PC-3 (cell line): ENCODE measurements at regions of chr14 and their contacts with region 1.

Region 1: GRCh38 chr14:31207755-31208545 is at the start of gene HECTD1:
- DNase-seq: peak; percentile 93
- ATAC-seq: peak; percentile 81
- H3K4me3 ChIP-seq: peak within 1 kb of the TSS; percentile 75
- H3K27ac ChIP-seq: peak within 1 kb of the TSS; percentile 93
- H3K4me1 ChIP-seq: peaks cover 17% of the 10 kb centered on the region
- H3K27me3 ChIP-seq: no peaks in the 10 kb centered on the region
- CTCF ChIP-seq: peak; percentile 71
- total RNA-seq, gene HECTD1: 152 and 214 TPM in 2 replicates

Region 2: GRCh38 chr14:31172084-31172483 is 35.9 kb before region 1 on chr14:
- CTCF ChIA-PET with region 1: interaction called, 4 read pairs
- POLR2A ChIA-PET with region 1: interaction called, 11 read pairs
- intact Hi-C with region 1: no loop called
- DNase-seq: peak; percentile 25
- ATAC-seq: peak; percentile 76
- H3K4me3 ChIP-seq: no peak overlapping the region
- H3K27ac ChIP-seq: peak overlapping the region; percentile 14; the same call in 1 of the 2 replicates
- H3K4me1 ChIP-seq: peaks cover 23% of the 10 kb centered on the region
- H3K27me3 ChIP-seq: no peaks in the 10 kb centered on the region
- CTCF ChIP-seq: no peak

Region 3: DNA sequence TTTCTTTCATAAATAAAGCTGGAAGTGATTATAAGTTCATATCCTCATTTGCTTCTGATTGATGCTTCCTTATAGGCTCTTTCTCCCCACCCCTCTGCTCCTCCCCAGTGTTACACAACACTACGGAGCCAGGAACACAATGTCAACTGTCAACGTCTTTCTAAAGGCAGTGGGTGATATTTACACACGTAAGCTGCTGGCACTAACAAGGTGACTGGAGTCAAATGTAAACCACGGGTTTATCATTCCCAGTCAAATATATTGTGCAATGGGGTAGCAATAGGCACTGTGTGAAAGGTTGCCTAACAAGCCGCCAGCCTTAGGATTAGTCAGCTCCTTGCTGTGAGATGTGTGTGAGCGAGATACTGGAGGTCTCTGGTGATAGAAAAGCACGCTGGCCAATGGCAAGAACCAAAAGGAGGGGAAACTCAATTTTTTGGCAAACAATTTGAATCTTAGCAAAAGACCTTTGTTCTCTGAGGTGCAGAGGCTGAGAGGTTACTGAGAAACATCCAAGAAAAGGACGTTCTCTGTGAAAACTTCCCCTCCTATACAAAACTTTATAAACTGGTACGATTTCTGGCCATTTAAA is 21.8 kb after region 1 on chr14:
- CTCF ChIA-PET with region 1: interaction called, 6 read pairs
- POLR2A ChIA-PET with region 1: interaction called, 5 read pairs
- intact Hi-C with region 1: loop called (anchors 1 kb)
- DNase-seq: peak; percentile 99
- ATAC-seq: peak; percentile 96
- H3K4me3 ChIP-seq: no peak overlapping the region; the same call in 1 of the 2 replicates
- H3K27ac ChIP-seq: peak overlapping the region; percentile 80
- H3K4me1 ChIP-seq: peaks cover 37% of the 10 kb centered on the region
- H3K27me3 ChIP-seq: no peaks in the 10 kb centered on the region
- CTCF ChIP-seq: no peak

Region 4: DNA sequence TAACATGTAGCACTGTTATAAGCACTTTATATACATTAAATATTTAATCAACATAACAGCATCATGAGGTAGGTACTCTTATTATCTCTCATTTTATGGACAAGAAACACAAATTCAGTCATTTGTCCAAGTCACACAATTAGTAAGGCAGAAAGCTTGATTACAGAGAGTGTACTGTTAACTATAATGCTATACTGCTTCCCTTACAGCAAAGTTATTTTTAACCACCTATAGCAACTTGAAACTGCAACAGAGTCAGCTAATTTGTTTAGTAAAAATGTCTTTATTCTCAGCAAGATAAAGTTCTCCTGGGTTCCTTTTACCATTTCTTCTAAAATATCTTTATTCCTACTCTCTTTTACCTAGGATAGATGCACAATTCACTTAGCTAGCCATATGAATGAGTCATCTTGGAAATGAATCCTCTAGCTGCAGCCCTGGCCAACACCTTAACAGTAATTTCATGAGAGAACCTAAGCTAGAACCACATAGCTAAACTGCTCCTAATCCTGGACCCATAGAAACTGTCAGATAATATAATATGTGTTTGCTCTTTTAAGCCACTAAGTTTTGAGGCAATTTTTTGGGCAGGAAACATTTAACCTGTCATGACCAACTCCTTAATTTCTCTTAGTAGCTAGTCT is 89.9 kb after region 1 on chr14:
- CTCF ChIA-PET with region 1: no interaction called
- POLR2A ChIA-PET with region 1: interaction called, 6 read pairs
- intact Hi-C with region 1: loop called (anchors 5 kb)
- DNase-seq: peak; percentile 38
- ATAC-seq: peak; percentile 96
- H3K4me3 ChIP-seq: no peak overlapping the region
- H3K27ac ChIP-seq: no peak overlapping the region
- H3K4me1 ChIP-seq: no peaks in the 10 kb centered on the region
- H3K27me3 ChIP-seq: no peaks in the 10 kb centered on the region
- CTCF ChIP-seq: no peak

Region 5: DNA sequence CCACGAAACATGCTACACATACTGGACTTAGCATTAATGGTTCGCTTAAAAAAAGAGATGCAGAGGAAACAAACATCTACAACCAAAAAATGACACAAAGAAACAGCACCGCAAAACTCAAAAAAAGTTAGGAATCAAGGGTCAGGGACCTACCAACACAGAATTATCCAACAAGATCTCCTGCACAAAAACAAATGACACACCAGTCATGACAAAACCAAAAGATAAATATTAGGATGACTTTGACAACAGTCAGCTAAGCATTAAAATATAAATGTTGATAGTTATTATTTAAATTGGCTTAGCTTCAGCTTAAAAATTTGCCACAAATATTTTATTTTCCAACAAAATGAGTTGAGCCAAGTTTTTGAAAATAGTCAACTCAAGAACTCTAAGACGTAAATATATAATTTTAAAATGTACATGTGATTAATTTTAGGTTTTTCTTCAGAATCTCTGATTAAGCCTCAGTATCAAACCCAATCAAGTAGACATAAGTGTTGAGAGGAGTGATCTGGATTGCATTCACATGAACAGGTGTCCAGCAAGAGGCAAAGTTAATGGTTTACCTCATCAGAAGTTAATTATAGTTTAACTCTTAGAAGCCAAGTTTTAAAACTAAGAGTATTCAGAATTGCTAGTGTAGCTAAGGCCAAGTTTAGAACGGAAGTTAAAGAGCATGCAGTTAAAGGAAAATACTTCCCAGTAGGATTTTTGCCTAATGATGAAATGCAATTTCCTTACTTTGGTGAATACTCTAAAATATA is 132.5 kb after region 1 on chr14:
- CTCF ChIA-PET with region 1: interaction called, 8 read pairs
- POLR2A ChIA-PET with region 1: interaction called, 3 read pairs
- intact Hi-C with region 1: loop called (anchors 5 kb)
- DNase-seq: peak; percentile 66
- ATAC-seq: peak; percentile 83
- H3K4me3 ChIP-seq: no peak overlapping the region; the same call in 1 of the 2 replicates
- H3K27ac ChIP-seq: peak overlapping the region; percentile 70
- H3K4me1 ChIP-seq: peaks cover 33% of the 10 kb centered on the region
- H3K27me3 ChIP-seq: no peaks in the 10 kb centered on the region
- CTCF ChIP-seq: no peak

Region 6: GRCh38 chr14:31360919-31361662 is 153.1 kb after region 1 on chr14:
- CTCF ChIA-PET with region 1: no interaction called
- POLR2A ChIA-PET with region 1: no interaction called
- intact Hi-C with region 1: loop called (anchors 1 kb)
- DNase-seq: peak; percentile 75
- ATAC-seq: peak; percentile 82
- H3K4me3 ChIP-seq: no peak overlapping the region
- H3K27ac ChIP-seq: peak overlapping the region; percentile 15
- H3K4me1 ChIP-seq: peaks cover 29% of the 10 kb centered on the region
- H3K27me3 ChIP-seq: no peaks in the 10 kb centered on the region
- CTCF ChIP-seq: no peak

Region 7: GRCh38 chr14:31380106-31380505 is 172.2 kb after region 1 on chr14:
- CTCF ChIA-PET with region 1: no interaction called
- POLR2A ChIA-PET with region 1: no interaction called
- intact Hi-C with region 1: no loop called
- DNase-seq: no peak
- ATAC-seq: no peak
- H3K4me3 ChIP-seq: no peak overlapping the region
- H3K27ac ChIP-seq: no peak overlapping the region
- H3K4me1 ChIP-seq: peaks cover 12% of the 10 kb centered on the region
- H3K27me3 ChIP-seq: no peaks in the 10 kb centered on the region
- CTCF ChIP-seq: no peak

Region 8: GRCh38 chr14:31456841-31457664 is 249.1 kb after region 1 on chr14 and contains the start of gene DTD2:
- CTCF ChIA-PET with region 1: no interaction called
- POLR2A ChIA-PET with region 1: no interaction called
- intact Hi-C with region 1: loop called (anchors 10 kb)
- DNase-seq: peak; percentile 99
- ATAC-seq: peak; percentile 99
- H3K4me3 ChIP-seq: peak within 1 kb of the TSS; percentile 93
- H3K27ac ChIP-seq: peak within 1 kb of the TSS; percentile 74
- H3K4me1 ChIP-seq: peaks cover 20% of the 10 kb centered on the region
- H3K27me3 ChIP-seq: no peaks in the 10 kb centered on the region
- CTCF ChIP-seq: no peak; the same call in 1 of the 2 replicates
- total RNA-seq, gene DTD2: 35.9 and 36.8 TPM in 2 replicates